ENCODE measurements at regions of chr3 and their contacts with region 1.

Region 1: DNA sequence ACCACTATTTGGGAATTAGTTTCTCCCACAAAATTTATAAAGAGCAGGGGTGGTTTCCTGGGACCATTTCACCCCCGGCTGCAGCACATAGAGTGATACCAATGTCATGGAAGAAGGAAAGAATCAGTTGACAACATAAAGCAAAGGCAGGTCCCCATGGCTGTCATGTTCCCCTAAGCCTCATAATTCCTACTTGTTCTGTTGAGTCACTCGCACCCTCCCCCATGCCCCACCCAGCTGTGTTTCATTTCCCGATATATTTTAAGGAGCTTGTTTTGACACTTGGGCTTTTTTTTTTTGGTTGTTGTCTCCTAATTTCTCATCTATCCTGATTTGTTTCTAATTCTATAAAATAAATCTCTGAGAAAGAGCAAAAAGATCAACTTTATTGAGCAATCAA is 24.9 kb downstream of the ERC2 start:
- DNase-seq: no peak
- H3K4me3 ChIP-seq: no peak overlapping the region
- H3K27ac ChIP-seq: no peak overlapping the region
- H3K4me1 ChIP-seq: no peaks in the 10 kb centered on the region
- H3K27me3 ChIP-seq: no peaks in the 10 kb centered on the region
- CTCF ChIP-seq: no peak
- EP300 ChIP-seq: no peak
- POLR2A ChIP-seq: no peak
- RAD21 ChIP-seq: no peak

Region 2: DNA sequence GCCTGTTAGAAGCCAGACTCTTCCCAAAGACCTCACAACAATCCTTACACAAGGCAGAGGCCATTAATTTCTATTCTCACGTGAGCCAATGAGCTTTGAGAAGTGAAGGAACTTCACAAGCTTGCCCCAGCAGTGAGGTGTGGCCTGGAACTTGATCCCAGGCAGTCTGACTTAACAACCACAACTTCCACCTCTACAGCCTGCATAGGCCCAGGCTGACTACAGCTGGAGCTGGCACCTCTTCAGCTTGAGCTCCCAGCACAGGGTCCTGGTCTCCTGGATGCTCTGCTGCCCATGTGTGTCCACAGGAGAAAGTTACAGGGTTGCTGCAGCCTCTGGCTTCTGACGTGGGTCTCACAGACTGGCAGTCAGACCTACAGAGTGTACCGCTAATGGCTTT is 86.1 kb before region 1 on chr3:
- CTCF ChIA-PET with region 1: interaction called, 10 read pairs
- POLR2A ChIA-PET with region 1: no interaction called
- DNase-seq: no peak
- H3K4me3 ChIP-seq: no peak overlapping the region
- H3K27ac ChIP-seq: no peak overlapping the region
- H3K4me1 ChIP-seq: peaks cover 2 to 11% (median 8%) of the 10 kb centered on the region in 4 experiments; a peak in 6 of 7 replicates
- H3K27me3 ChIP-seq: no peaks in the 10 kb centered on the region
- CTCF ChIP-seq: no peak
- EP300 ChIP-seq: no peak
- POLR2A ChIP-seq: no peak
- RAD21 ChIP-seq: no peak

Region 3: GRCh38 chr3:56365905-56366640 is 77.3 kb before region 1 on chr3:
- CTCF ChIA-PET with region 1: interaction called, 12 read pairs
- POLR2A ChIA-PET with region 1: no interaction called
- DNase-seq: no peak
- H3K4me3 ChIP-seq: no peak overlapping the region
- H3K27ac ChIP-seq: no peak overlapping the region
- H3K4me1 ChIP-seq: peaks cover 0 to 8% (median under 1%) of the 10 kb centered on the region in 4 experiments; a peak in 2 of 7 replicates
- H3K27me3 ChIP-seq: no peaks in the 10 kb centered on the region
- CTCF ChIP-seq: no peak
- EP300 ChIP-seq: no peak
- POLR2A ChIP-seq: no peak
- RAD21 ChIP-seq: no peak

Region 4: GRCh38 chr3:56467108-56467507 is 23.7 kb after region 1 on chr3:
- CTCF ChIA-PET with region 1: interaction called, 81 read pairs
- POLR2A ChIA-PET with region 1: no interaction called
- DNase-seq: peak; percentile 80 to 83
- H3K4me3 ChIP-seq: peak overlapping the region; percentile 73 to 97 (median 77)
- H3K27ac ChIP-seq: no peak overlapping the region
- H3K4me1 ChIP-seq: peaks cover 0 to 4% (median 2%) of the 10 kb centered on the region in 4 experiments; a peak in 3 of 7 replicates
- H3K27me3 ChIP-seq: no peaks in the 10 kb centered on the region
- CTCF ChIP-seq: no peak
- EP300 ChIP-seq: no peak
- POLR2A ChIP-seq: no peak
- RAD21 ChIP-seq: no peak

Measured in H1 (cell line).